PC-9 (cell line): ENCODE measurements at regions of chr1 and their contacts with region 1.

Region 1: GRCh38 chr1:73537400-73537799 is 660.6 kb downstream of the LRRIQ3 start:
- DNase-seq: no peak
- H3K4me3 ChIP-seq: no peak overlapping the region
- H3K27ac ChIP-seq: no peak overlapping the region
- H3K4me1 ChIP-seq: no peaks in the 10 kb centered on the region
- H3K27me3 ChIP-seq: no peaks in the 10 kb centered on the region
- CTCF ChIP-seq: no peak

Region 2: DNA sequence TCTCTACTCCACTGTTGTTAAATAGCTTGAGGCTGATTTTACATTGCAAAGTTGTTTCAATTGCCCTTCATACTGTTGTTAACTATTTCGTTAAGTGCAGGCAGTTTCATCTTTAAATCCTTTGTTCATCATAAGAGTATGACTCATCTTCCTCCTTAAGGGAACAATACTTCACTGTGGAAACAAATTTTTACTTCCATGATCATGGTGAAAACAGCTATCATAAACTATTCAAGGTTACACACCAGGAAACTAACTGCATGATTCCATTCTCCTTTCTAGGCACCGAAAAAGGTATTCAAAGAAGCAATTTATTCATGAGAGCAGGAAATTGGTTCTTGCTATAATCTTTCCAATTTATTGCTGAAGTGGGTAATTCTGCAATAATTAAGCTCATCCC is 67.3 kb after region 1 on chr1:
- CTCF ChIA-PET with region 1: no interaction called
- POLR2A ChIA-PET with region 1: no interaction called
- intact Hi-C with region 1: loop called (anchors 10 kb)
- DNase-seq: peak in 1 of 2 experiments; percentile 33
- H3K4me3 ChIP-seq: no peak overlapping the region
- H3K27ac ChIP-seq: no peak overlapping the region
- H3K4me1 ChIP-seq: no peaks in the 10 kb centered on the region
- H3K27me3 ChIP-seq: no peaks in the 10 kb centered on the region
- CTCF ChIP-seq: no peak